ENCODE measurements at regions of chr12 and their contacts with region 1.

Region 1: GRCh38 chr12:53079226-53080117 is at the start of gene SPRYD3:
- DNase-seq: peak; percentile 97
- total RNA-seq, gene SPRYD3: 16.7 and 21.4 TPM in 2 replicates

Region 2: GRCh38 chr12:52865090-52865944 is 214.2 kb before region 1 on chr12:
- in situ Hi-C with region 1: no loop called
- DNase-seq: peak; percentile 52

Region 3: GRCh38 chr12:53123578-53124351 is 44.3 kb after region 1 on chr12:
- in situ Hi-C with region 1: loop called (anchors 5 kb)
- DNase-seq: no peak

Region 4: DNA sequence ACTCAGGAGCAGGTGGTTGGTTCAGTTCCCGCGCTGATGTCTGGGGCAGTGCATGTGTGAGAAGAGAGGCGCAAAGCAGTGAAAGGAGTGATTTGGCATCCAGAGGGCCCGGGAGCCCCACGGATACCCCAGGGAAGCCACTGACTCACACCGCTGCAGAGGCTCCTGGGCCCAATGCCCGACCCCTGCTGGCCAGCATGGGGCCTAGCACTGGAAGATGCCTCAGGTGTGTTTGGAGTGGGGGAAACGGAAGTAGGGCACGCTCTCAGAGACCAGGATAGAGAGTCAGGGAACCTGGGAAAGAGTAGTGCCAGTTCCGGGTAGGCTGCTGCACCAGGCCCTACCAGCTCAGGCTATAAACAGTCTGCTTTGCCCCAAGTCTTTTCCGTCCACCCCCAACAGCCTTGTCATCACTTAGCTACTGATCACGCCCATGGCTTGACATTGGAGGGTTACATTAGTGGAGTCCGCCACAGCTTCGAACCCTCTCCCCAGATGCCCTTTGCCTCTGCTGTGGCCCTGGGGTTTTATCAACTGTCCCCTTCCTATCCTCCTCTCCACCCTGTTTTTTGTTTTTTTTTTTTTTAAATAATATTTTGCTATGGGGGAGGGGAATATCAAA is 110.7 kb after region 1 on chr12:
- in situ Hi-C with region 1: loop called (anchors 10 kb)
- DNase-seq: peak; percentile 45